ENCODE measurements at regions of chr1 and their contacts with region 1.

Region 1: DNA sequence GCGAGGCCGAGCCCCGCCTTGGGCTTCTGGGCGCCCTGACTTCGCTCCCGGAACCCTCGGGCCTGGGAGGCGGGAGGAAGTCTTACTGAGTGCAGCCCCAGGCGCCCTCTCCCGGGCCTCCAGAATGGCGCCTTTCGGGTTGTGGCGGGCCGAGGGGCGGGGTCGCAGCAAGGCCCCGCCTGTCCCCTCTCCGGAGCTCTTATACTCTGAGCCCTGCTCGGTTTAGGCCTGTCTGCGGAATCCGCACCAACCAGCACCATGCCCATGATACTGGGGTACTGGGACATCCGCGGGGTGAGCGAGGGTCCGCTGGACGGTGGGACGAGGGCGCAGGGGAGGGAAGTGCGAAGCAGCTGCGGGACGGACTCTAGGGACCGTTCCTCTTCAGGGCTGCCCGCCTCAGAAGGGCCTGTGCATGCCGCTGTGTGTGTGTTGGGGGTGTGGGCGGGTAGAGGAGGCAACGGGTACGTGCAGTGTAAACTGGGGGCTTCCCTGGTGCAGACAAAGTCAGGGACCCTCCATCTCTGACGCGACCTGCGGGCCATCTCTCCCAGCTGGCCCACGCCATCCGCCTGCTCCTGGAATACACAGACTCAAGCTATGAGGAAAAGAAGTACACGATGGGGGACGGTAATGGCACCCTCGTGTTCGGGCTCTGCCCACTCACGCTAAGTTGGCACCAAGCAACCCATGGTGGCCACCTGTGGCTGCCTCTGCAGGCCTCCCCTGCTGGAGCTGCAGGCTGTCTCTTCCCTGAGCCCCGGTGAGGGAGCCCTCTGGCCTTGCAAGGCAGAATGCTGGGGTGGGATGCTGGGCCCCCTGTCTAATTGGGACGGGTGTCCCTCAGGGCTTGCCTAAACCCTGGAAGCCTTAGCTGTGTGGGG is at the start of gene GSTM1:
- DNase-seq: peak; percentile 49 to 89
- H3K4me3 ChIP-seq: peak within 1 kb of the TSS; percentile 45 to 62 (median 50)
- H3K27ac ChIP-seq: no peak within 1 kb of the TSS
- H3K4me1 ChIP-seq: peaks cover 0 to 5% (median 3%) of the 10 kb centered on the region in 4 experiments; a peak in 3 of 7 replicates
- H3K27me3 ChIP-seq: no peaks in the 10 kb centered on the region
- CTCF ChIP-seq: peak in 2 of 3 experiments; percentile 29 to 56; a peak in 3 of 4 replicates
- EP300 ChIP-seq: no peak
- POLR2A ChIP-seq: peak in 1 of 2 experiments; percentile 64; a peak in 1 of 3 replicates
- RAD21 ChIP-seq: peak; percentile 34 to 60; a peak in 3 of 4 replicates
- total RNA-seq, gene GSTM1: 16.5 and 16.7 TPM in 2 replicates

Region 2: DNA sequence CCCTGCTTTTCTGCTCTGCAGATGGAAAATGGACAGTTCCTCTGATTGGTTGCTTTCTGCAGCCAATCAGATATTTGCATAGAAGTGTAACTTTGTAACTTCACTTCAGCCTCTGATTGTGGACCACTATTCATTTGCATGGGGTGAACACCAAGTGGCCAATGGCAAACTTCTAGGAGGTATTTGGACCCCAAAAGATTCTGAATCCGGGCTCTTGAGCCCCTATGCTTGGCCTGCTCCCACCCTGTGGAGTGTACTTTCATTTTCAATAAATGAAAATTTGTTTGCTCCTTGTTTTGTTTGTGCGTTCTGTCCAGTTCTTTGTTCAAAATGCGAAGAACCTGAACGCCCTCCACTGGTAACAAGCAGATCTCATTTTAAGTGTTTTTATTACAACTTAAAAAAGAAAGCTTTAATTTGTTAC is 38.4 kb before region 1 on chr1:
- CTCF ChIA-PET with region 1: interaction called, 12 read pairs
- POLR2A ChIA-PET with region 1: no interaction called
- DNase-seq: no peak
- H3K4me3 ChIP-seq: no peak overlapping the region
- H3K27ac ChIP-seq: no peak overlapping the region
- H3K4me1 ChIP-seq: no peaks in the 10 kb centered on the region
- H3K27me3 ChIP-seq: peaks cover 0 to 2% (median 2%) of the 10 kb centered on the region in 4 experiments; a peak in 6 of 7 replicates
- CTCF ChIP-seq: no peak
- EP300 ChIP-seq: no peak
- POLR2A ChIP-seq: no peak
- RAD21 ChIP-seq: no peak

Region 3: DNA sequence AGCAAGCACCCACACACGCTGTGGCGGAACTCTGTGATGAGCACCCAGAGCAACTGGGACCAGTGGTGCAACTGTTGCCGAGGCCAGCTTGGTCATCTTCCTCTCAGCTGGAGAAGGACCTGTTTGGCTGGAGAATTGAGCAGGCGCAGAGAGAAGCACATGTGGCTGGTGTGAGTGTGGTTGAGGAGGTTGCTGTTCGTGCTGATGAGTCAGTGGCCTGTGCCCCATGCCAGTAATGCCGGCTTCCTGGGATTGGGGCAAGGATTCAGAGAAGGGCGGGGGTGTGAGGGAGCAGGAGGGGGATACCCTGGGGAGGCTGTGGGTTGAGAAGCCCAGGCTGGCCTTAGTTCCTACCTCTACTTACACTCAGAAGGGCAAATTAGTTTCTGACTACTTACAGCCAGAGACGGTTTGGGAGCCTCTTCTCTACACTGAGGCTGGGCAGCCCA is 133.4 kb after region 1 on chr1:
- CTCF ChIA-PET with region 1: no interaction called
- POLR2A ChIA-PET with region 1: no interaction called
- DNase-seq: no peak
- H3K4me3 ChIP-seq: no peak overlapping the region
- H3K27ac ChIP-seq: no peak overlapping the region
- H3K4me1 ChIP-seq: peaks cover 0 to 5% (median 0%) of the 10 kb centered on the region in 4 experiments; a peak in 1 of 7 replicates
- H3K27me3 ChIP-seq: no peaks in the 10 kb centered on the region
- CTCF ChIP-seq: no peak
- EP300 ChIP-seq: no peak
- POLR2A ChIP-seq: no peak
- RAD21 ChIP-seq: no peak

Measured in H1 (cell line).